CD4-positive, alpha-beta memory T cell (primary cell): ENCODE measurements at regions of chr5 and their contacts with region 1.

Region 1: GRCh38 chr5:55062039-55062779 is 38.2 kb downstream of the GZMK start:
- DNase-seq: peak; percentile 42 to 63 (median 57)
- H3K4me3 ChIP-seq: peak overlapping the region; percentile 2 to 41
- H3K4me3 Mint-ChIP-seq: peak overlapping the region; percentile 82 to 91 (median 88)
- H3K27ac ChIP-seq: peak overlapping the region; percentile 1
- H3K27ac Mint-ChIP-seq: peak overlapping the region; percentile 50 to 92 (median 80)
- H3K4me1 ChIP-seq: peaks cover 38% of the 10 kb centered on the region
- H3K4me1 Mint-ChIP-seq: peaks cover 38 to 64% (median 50%) of the 10 kb centered on the region in 4 donors
- H3K27me3 ChIP-seq: no peaks in the 10 kb centered on the region
- H3K27me3 Mint-ChIP-seq: no peaks in the 10 kb centered on the region

Region 2: DNA sequence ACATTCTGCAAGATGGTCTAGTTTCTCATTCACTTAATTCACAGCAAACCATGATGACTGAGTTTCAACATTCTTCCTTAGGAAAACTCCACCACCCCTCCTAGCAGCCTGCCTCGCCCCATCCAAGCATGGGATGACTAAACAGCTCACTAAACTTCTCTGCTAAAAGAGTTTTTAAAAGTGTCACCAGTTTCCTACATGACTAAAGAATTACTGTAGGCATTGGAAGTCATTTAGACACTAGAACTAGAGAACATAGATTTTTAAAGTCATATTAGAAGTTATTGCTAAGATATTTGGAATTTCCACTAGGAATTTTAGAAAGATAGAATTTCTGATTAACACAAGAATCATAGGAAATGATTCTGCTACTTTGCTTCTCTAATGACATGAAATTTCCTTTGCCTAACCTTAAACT is 71.4 kb before region 1 on chr5:
- CTCF ChIA-PET with region 1: interaction called, 3 read pairs
- POLR2A ChIA-PET with region 1: interaction called, 11 read pairs
- intact Hi-C with region 1: no loop called
- DNase-seq: no peak
- H3K4me3 ChIP-seq: no peak overlapping the region
- H3K4me3 Mint-ChIP-seq: peak overlapping the region in 2 of 8 donors; percentile 7 to 52
- H3K27ac ChIP-seq: no peak overlapping the region
- H3K27ac Mint-ChIP-seq: no peak overlapping the region
- H3K4me1 ChIP-seq: peaks cover 49% of the 10 kb centered on the region
- H3K4me1 Mint-ChIP-seq: peaks cover 32 to 75% (median 50%) of the 10 kb centered on the region in 4 donors
- H3K27me3 ChIP-seq: no peaks in the 10 kb centered on the region
- H3K27me3 Mint-ChIP-seq: no peaks in the 10 kb centered on the region

Region 3: GRCh38 chr5:55021410-55021809 is 40.8 kb before region 1 on chr5:
- CTCF ChIA-PET with region 1: no interaction called
- POLR2A ChIA-PET with region 1: interaction called, 14 read pairs
- intact Hi-C with region 1: loop called (anchors 5 kb)
- DNase-seq: no peak
- H3K4me3 ChIP-seq: no peak overlapping the region
- H3K4me3 Mint-ChIP-seq: peak overlapping the region in 6 of 8 donors; percentile 3 to 71 (median 46)
- H3K27ac ChIP-seq: no peak overlapping the region
- H3K27ac Mint-ChIP-seq: peak overlapping the region in 6 of 7 donors; percentile 49 to 92 (median 77)
- H3K4me1 ChIP-seq: peaks cover 46% of the 10 kb centered on the region
- H3K4me1 Mint-ChIP-seq: peaks cover 31 to 65% (median 50%) of the 10 kb centered on the region in 4 donors
- H3K27me3 ChIP-seq: no peaks in the 10 kb centered on the region
- H3K27me3 Mint-ChIP-seq: no peaks in the 10 kb centered on the region

Region 4: DNA sequence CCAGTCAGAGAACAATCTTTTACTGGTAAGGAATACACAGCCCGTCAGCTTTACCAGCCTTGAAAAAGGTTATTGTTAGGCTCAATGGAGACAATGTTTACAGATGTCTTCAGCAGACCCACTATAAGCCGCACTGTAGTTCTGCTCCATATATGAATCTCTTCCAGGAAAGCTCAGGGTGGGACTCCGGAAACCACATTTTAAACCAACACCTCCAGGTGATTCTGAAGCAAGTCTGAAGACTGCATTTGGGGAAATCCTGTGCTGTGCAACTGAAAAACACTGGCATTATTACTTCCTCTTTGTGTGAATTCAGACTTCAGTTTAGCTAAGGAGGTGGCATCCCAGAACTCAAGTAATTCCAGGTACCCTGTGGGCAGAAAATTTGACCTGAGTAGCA is 34.6 kb before region 1 on chr5:
- CTCF ChIA-PET with region 1: no interaction called
- POLR2A ChIA-PET with region 1: interaction called, 14 read pairs
- intact Hi-C with region 1: loop called (anchors 5 kb)
- DNase-seq: peak; percentile 11 to 66 (median 24)
- H3K4me3 ChIP-seq: peak overlapping the region in 1 of 2 donors; percentile 4
- H3K4me3 Mint-ChIP-seq: peak overlapping the region; percentile 48 to 89 (median 72)
- H3K27ac ChIP-seq: peak overlapping the region; percentile 36
- H3K27ac Mint-ChIP-seq: peak overlapping the region; percentile 18 to 86 (median 77)
- H3K4me1 ChIP-seq: peaks cover 77% of the 10 kb centered on the region
- H3K4me1 Mint-ChIP-seq: peaks cover 51 to 95% (median 71%) of the 10 kb centered on the region in 4 donors
- H3K27me3 ChIP-seq: no peaks in the 10 kb centered on the region
- H3K27me3 Mint-ChIP-seq: no peaks in the 10 kb centered on the region

Region 5: DNA sequence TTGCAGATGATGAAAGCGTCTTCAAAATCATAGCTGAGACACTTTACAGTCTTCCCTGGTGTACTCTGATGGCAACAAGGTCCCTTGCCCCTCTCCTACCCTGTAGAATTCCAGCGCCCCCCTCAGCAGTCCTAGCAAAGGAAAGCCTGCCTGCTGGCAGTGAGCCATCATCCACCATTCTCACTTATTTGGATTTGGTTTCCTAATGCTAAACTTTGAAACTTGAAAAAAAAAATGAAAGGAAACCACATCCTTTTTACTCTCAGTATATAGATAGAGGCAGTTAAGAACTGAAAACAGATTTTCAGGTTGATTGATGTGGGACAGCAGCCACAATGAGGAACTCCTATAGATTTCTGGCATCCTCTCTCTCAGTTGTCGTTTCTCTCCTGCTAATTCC is 40.1 kb after region 1 on chr5 and contains the start of gene GZMA:
- CTCF ChIA-PET with region 1: interaction called, 11 read pairs
- POLR2A ChIA-PET with region 1: interaction called, 55 read pairs
- intact Hi-C with region 1: loop called (anchors 1 kb)
- DNase-seq: peak; percentile 66 to 81 (median 76)
- H3K4me3 ChIP-seq: peak within 1 kb of the TSS; percentile 34 to 56
- H3K4me3 Mint-ChIP-seq: peak within 1 kb of the TSS; percentile 83 to 96 (median 90)
- H3K27ac ChIP-seq: peak within 1 kb of the TSS; percentile 32
- H3K27ac Mint-ChIP-seq: peak within 1 kb of the TSS; percentile 78 to 96 (median 91)
- H3K4me1 ChIP-seq: peaks cover 61% of the 10 kb centered on the region
- H3K4me1 Mint-ChIP-seq: peaks cover 58 to 89% (median 75%) of the 10 kb centered on the region in 4 donors
- H3K27me3 ChIP-seq: no peaks in the 10 kb centered on the region
- H3K27me3 Mint-ChIP-seq: no peaks in the 10 kb centered on the region
- total RNA-seq, gene GZMA: 25.0 to 28.2 TPM

Region 6: DNA sequence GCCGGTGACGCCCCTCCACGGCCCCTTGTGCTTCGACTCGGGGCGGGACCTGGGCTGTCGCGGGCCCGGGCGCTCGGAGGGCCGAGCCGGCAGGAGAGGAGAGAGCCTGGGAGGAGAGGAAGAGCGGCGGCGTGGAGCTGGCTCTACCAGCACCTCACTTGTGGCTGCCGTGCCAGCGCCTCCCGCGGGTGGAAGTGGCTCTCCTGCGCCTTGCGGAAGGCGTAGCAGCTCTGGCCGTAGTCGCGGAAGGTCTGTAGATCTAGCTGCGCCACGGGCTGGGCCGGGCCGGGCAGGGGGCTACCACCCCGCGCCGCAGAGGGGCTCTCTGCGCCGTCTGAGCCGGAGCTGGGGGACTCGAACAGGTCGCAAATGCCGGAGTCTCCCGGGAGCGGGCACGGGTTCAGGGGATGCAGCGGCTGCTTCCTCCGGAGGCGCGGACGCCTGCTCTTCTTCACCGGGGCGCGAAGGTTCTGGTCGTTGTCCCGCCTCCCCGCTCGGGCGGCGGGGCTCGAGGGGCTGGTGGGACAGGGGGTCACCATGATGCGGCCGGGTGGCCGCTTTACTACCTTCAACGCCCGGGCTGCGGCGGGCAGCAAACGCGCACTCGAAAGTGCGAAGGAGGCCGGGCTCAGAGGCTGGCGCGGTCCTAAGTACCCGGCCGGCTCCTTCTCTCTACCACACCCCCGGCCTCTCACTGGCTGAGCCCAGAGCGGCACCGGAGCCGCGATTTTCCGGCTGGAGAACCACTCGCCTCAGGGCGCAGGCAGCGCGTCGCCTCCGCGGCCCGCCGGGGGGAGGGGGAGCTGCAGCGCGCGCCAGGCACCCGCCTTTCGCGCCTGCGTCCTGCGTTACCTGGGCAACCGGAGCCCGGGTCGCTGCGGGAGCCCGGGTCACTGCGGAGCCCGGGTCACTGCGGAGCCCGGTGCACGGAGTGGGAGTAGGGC is 171.0 kb after region 1 on chr5 and contains the start of gene CCNO:
- CTCF ChIA-PET with region 1: no interaction called
- POLR2A ChIA-PET with region 1: no interaction called
- intact Hi-C with region 1: no loop called
- DNase-seq: peak; percentile 56 to 62 (median 59)
- H3K4me3 ChIP-seq: peak within 1 kb of the TSS; percentile 46 to 65
- H3K4me3 Mint-ChIP-seq: peak within 1 kb of the TSS; percentile 80 to 94 (median 89)
- H3K27ac ChIP-seq: no peak within 1 kb of the TSS
- H3K27ac Mint-ChIP-seq: peak within 1 kb of the TSS in 3 of 7 donors; percentile 53 to 65 (median 58)
- H3K4me1 ChIP-seq: peaks cover 33% of the 10 kb centered on the region
- H3K4me1 Mint-ChIP-seq: peaks cover 18 to 38% (median 30%) of the 10 kb centered on the region in 4 donors
- H3K27me3 ChIP-seq: peaks cover 55% of the 10 kb centered on the region
- H3K27me3 Mint-ChIP-seq: peaks cover 50 to 61% of the 10 kb centered on the region in 2 donors
- total RNA-seq, gene CCNO: not detected